Activated CD4-positive, alpha-beta memory T cell treated with anti-CD3 and anti-CD28 coated beads for 36 hours (primary cell): ENCODE measurements at regions of chr1 and their contacts with region 1.

Region 1: GRCh38 chr1:117534995-117535467 is 70.8 kb upstream of the TENT5C start:
- DNase-seq: peak; percentile 41
- H3K4me3 Mint-ChIP-seq: no peak overlapping the region
- H3K27ac Mint-ChIP-seq: no peak overlapping the region
- H3K4me1 Mint-ChIP-seq: peaks cover 21% of the 10 kb centered on the region
- H3K27me3 Mint-ChIP-seq: peaks cover 5% of the 10 kb centered on the region

Region 2: GRCh38 chr1:117077267-117077666 is 457.8 kb before region 1 on chr1:
- CTCF ChIA-PET with region 1: interaction called, 3 read pairs
- POLR2A ChIA-PET with region 1: no interaction called
- intact Hi-C with region 1: loop called (anchors 5 kb)
- DNase-seq: peak; percentile 79
- H3K4me3 Mint-ChIP-seq: no peak overlapping the region
- H3K27ac Mint-ChIP-seq: peak overlapping the region; percentile 71
- H3K4me1 Mint-ChIP-seq: peaks cover 30% of the 10 kb centered on the region
- H3K27me3 Mint-ChIP-seq: no peaks in the 10 kb centered on the region

Region 3: GRCh38 chr1:117295001-117295400 is 240.0 kb before region 1 on chr1:
- CTCF ChIA-PET with region 1: no interaction called
- POLR2A ChIA-PET with region 1: no interaction called
- intact Hi-C with region 1: no loop called
- DNase-seq: no peak
- H3K4me3 Mint-ChIP-seq: no peak overlapping the region
- H3K27ac Mint-ChIP-seq: no peak overlapping the region
- H3K4me1 Mint-ChIP-seq: no peaks in the 10 kb centered on the region
- H3K27me3 Mint-ChIP-seq: no peaks in the 10 kb centered on the region

Region 4: GRCh38 chr1:117572546-117572945 is 37.5 kb after region 1 on chr1:
- CTCF ChIA-PET with region 1: interaction called, 3 read pairs
- POLR2A ChIA-PET with region 1: no interaction called
- intact Hi-C with region 1: loop called (anchors 2 kb)
- DNase-seq: peak; percentile 40
- H3K4me3 Mint-ChIP-seq: no peak overlapping the region
- H3K27ac Mint-ChIP-seq: no peak overlapping the region
- H3K4me1 Mint-ChIP-seq: peaks cover 21% of the 10 kb centered on the region
- H3K27me3 Mint-ChIP-seq: no peaks in the 10 kb centered on the region

Region 5: DNA sequence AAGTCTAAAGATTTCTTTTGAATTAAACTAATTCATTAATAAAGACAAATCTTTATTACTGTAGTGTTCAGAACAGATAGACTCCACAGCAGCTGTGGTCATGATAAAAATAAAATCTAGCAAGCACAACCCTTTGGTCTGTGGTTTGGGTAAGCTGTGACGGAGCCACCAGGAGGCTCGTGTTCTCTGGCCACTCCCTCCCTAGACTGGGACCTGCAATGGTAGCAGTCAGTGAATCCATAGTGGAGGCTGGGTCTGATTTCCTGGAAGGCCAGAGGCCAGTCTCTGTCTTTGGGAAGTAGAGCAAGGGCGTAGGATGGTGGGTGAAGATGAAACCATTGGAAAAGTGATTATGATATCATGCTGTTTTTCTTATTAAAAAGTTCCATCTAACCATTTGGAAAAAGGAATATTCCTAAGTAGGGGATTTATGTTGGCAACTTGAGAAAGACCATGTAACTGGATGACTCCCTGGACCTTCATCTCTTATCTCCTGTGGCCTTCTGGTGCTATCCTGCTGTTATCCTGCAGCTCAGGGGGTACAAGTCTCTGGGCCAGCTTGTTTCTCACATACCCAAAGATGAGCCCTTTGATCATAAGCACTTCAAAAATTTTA is 109.8 kb after region 1 on chr1:
- CTCF ChIA-PET with region 1: interaction called, 12 read pairs
- POLR2A ChIA-PET with region 1: no interaction called
- intact Hi-C with region 1: no loop called
- DNase-seq: no peak
- H3K4me3 Mint-ChIP-seq: no peak overlapping the region
- H3K27ac Mint-ChIP-seq: no peak overlapping the region
- H3K4me1 Mint-ChIP-seq: peaks cover 8% of the 10 kb centered on the region
- H3K27me3 Mint-ChIP-seq: peaks cover 6% of the 10 kb centered on the region

Region 6: GRCh38 chr1:117674521-117675397 is 139.7 kb after region 1 on chr1:
- CTCF ChIA-PET with region 1: interaction called, 75 read pairs
- POLR2A ChIA-PET with region 1: interaction called, 3 read pairs
- intact Hi-C with region 1: loop called (anchors 1 kb)
- DNase-seq: peak; percentile 68
- H3K4me3 Mint-ChIP-seq: no peak overlapping the region
- H3K27ac Mint-ChIP-seq: no peak overlapping the region
- H3K4me1 Mint-ChIP-seq: peaks cover 16% of the 10 kb centered on the region
- H3K27me3 Mint-ChIP-seq: no peaks in the 10 kb centered on the region

Region 7: DNA sequence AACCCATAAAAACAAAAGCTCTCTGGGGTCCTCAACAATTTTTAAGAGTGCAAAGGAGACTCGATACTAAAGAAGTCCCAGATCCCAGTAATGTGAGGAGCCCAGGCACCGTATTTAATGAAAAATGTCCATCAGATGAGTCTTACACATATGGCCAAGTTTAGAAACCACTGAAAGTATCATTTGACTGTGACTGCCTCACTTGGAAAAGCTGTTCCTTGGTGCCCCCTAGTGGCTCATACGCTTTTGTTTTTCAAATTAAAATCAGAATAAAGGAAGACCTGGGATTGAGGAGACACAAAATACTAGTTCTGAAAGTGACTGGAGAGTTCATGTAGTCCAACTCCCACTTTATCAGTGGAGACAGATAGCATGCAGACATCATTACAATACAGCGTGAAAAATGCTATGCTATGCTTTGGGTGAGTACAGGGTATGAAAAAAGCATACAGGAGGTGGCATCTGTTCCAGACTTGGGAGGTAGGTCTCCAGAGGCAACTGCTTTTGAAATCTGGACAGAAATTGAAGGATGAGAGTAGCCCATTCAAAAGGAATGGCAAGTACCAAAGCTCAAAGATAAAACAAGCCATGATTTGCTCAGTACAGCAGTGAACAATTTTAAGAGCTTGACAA is 360.6 kb after region 1 on chr1:
- CTCF ChIA-PET with region 1: interaction called, 18 read pairs
- POLR2A ChIA-PET with region 1: no interaction called
- intact Hi-C with region 1: loop called (anchors 1 kb)
- DNase-seq: peak; percentile 64
- H3K4me3 Mint-ChIP-seq: no peak overlapping the region
- H3K27ac Mint-ChIP-seq: no peak overlapping the region
- H3K4me1 Mint-ChIP-seq: peaks cover 4% of the 10 kb centered on the region
- H3K27me3 Mint-ChIP-seq: no peaks in the 10 kb centered on the region